ENCODE measurements at regions of chr14 and their contacts with region 1.

Region 1: GRCh38 chr14:23034483-23035302 is at the start of gene PSMB5:
- DNase-seq: peak; percentile 67
- ATAC-seq: peak; percentile 93
- H3K4me3 Mint-ChIP-seq: peak within 1 kb of the TSS; percentile 84
- H3K27ac Mint-ChIP-seq: peak within 1 kb of the TSS; percentile 96
- H3K4me1 Mint-ChIP-seq: peaks cover 29% of the 10 kb centered on the region
- H3K27me3 Mint-ChIP-seq: no peaks in the 10 kb centered on the region
- CTCF ChIP-seq: no peak
- total RNA-seq, gene PSMB5: 53.3 and 67.5 TPM in 2 replicates

Region 2: DNA sequence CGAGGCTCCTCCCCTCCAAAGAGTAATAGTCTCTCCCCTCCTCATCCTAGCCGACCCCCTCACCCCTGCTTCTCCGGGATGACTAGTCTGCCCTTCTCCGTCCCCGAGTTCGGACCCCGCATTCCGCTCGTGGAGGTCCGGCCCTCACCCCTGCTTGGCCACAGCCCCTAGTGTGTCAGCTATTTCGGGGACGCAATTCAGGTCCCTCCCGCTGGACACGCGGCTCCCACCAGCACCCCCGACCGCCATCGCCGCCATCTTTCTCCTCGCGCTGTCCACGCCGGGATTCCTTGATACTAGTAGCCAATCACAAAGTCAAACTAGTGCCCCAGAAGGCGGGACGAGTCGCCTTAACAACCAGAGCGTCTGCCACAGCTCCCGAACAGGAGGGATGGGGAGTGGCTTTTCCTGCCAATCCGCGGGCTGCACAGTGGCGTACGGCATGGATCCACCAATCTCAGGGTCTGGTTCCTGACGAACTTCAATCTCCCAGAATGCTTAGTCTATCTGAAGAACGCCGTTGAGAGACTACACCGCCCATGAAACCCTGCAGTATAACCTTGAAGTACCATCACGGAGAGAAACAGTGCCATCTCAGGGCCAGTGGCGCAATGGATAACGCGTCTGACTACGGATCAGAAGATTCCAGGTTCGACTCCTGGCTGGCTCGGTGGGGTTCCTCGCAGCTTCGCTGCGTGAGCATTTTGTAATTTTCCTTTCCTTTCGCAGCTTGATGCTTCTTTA is 105.4 kb before region 1 on chr14 and contains the start of gene PRMT5:
- CTCF ChIA-PET with region 1: no interaction called
- POLR2A ChIA-PET with region 1: interaction called, 3 read pairs
- intact Hi-C with region 1: loop called (anchors 1 kb)
- DNase-seq: peak; percentile 83
- ATAC-seq: peak; percentile 93
- H3K4me3 Mint-ChIP-seq: no peak within 1 kb of the TSS
- H3K27ac Mint-ChIP-seq: no peak within 1 kb of the TSS
- H3K4me1 Mint-ChIP-seq: peaks cover 14% of the 10 kb centered on the region
- H3K27me3 Mint-ChIP-seq: no peaks in the 10 kb centered on the region
- CTCF ChIP-seq: no peak
- total RNA-seq, gene PRMT5: 75.3 and 96.5 TPM in 2 replicates

Region 3: GRCh38 chr14:23068476-23069412 is 34.1 kb after region 1 on chr14:
- CTCF ChIA-PET with region 1: interaction called, 5 read pairs
- POLR2A ChIA-PET with region 1: interaction called, 6 read pairs
- intact Hi-C with region 1: loop called (anchors 2 kb)
- DNase-seq: no peak
- ATAC-seq: peak; percentile 85
- H3K4me3 Mint-ChIP-seq: peak overlapping the region; percentile 22
- H3K27ac Mint-ChIP-seq: peak overlapping the region; percentile 50
- H3K4me1 Mint-ChIP-seq: peaks cover 36% of the 10 kb centered on the region
- H3K27me3 Mint-ChIP-seq: no peaks in the 10 kb centered on the region
- CTCF ChIP-seq: peak; percentile 79

Measured in activated B cell treated with CpG ODN at 0.5 μM for 24 hours (primary cell).